WTC11 (cell line): ENCODE measurements at regions of chr1 and their contacts with region 1.

Region 1: DNA sequence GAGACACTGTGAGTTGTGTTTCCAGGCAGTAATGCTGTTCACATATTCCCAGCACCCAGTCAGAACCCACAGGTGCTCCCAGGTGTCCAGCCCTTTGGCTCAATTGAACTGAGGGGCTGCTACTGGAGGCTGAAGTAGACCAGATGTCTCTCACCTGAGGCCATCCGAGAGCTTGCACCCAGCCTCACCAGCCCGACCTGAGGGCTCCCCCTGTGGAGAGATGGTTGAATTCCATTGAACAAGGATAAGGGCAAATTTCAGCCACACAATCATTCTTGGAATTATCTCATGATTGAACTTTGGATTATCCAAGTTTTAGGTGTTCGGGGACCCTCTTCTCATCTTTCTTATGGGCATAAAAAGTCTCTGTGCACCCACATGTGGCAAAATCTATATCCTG is 52.1 kb downstream of the OBSCN start:
- DNase-seq: no peak
- ATAC-seq: peak; percentile 80
- H3K4me3 Mint-ChIP-seq: no peak overlapping the region
- H3K27ac Mint-ChIP-seq: no peak overlapping the region
- H3K4me1 Mint-ChIP-seq: no peaks in the 10 kb centered on the region
- H3K27me3 Mint-ChIP-seq: no peaks in the 10 kb centered on the region
- CTCF ChIP-seq: peak; percentile 28; the same call in 1 of the 2 replicates

Region 2: GRCh38 chr1:228270032-228270431 is 10.1 kb after region 1 on chr1:
- CTCF ChIA-PET with region 1: interaction called, 10 read pairs
- POLR2A ChIA-PET with region 1: no interaction called
- DNase-seq: no peak
- ATAC-seq: no peak
- H3K4me3 Mint-ChIP-seq: no peak overlapping the region
- H3K27ac Mint-ChIP-seq: no peak overlapping the region
- H3K4me1 Mint-ChIP-seq: peaks cover 5% of the 10 kb centered on the region; the same call in 1 of the 2 replicates
- H3K27me3 Mint-ChIP-seq: peaks cover 8% of the 10 kb centered on the region
- CTCF ChIP-seq: no peak